ENCODE measurements at regions of chr7 and their contacts with region 1.

Region 1: DNA sequence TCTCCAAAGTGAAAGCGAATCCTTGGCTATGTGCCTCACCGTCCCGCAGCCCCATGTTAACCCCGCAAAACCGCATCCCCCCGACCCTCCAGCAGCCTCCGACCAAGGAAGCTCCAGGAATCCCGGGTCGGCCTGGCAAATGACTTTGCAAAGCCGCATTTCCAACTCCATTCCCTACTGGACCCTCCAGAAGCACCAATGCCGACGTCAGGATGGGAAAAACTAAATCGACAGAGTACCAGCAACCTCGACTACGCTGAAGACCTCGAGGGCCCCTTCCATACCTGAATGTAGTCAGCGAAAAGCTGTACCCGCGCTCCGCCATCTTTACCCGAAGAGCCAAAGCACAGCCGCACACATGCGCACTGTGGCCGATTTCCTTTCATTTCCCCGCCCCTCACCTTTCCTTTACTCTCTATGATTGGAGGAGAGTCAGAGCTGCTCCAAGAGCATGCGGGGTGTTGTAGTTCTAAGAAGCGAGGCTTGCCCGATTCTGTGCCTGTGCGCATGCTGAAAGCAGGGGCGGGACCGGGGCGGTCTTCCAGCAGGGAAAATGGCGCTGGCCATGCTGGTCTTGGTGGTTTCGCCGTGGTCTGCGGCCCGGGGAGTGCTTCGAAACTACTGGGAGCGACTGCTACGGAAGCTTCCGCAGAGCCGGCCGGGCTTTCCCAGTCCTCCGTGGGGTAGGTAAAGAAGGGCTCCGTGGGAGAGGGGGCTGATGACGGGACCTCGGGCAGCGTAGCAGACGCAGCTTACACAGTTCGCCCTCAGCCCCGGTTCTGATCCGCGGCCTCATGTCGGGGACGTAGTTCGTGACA is at the starts of genes MRPL32 and PSMA2:
- DNase-seq: peak; percentile 95
- CTCF ChIP-seq: no peak

Region 2: GRCh38 chr7:42677751-42678699 is 254.0 kb before region 1 on chr7:
- CTCF ChIA-PET with region 1: no interaction called
- POLR2A ChIA-PET with region 1: no interaction called
- DNase-seq: no peak
- CTCF ChIP-seq: no peak

Region 3: GRCh38 chr7:42914421-42915045 is 17.5 kb before region 1 on chr7:
- CTCF ChIA-PET with region 1: interaction called, 33 read pairs
- POLR2A ChIA-PET with region 1: no interaction called
- DNase-seq: no peak
- CTCF ChIP-seq: no peak

Region 4: DNA sequence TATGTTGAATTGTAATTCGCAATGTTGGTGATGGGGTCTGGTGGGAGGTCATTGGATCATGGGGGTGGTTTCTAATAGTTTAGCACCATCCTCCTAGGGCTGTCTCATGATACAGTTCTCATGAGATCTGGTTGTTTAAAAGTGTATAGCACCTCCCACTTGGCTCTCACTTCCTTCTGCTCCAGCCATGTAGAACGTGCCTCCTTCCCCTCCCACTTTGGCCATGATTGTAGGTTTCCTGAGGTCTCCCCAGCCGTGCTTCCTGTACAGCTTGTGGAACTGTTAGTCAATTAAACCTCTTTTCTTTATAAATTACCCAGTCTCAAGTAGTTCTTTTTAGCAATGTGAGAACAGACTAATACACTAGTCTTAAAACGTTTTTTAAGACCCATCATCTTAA is 164.8 kb after region 1 on chr7:
- CTCF ChIA-PET with region 1: no interaction called
- POLR2A ChIA-PET with region 1: no interaction called
- DNase-seq: no peak
- CTCF ChIP-seq: no peak

Region 5: GRCh38 chr7:43314379-43315189 is 382.5 kb after region 1 on chr7:
- CTCF ChIA-PET with region 1: no interaction called
- POLR2A ChIA-PET with region 1: no interaction called
- DNase-seq: no peak
- CTCF ChIP-seq: no peak

Measured in GM10248 (cell line).